MCF 10A (cell line): ENCODE measurements at regions of chr4 and their contacts with region 1.

Region 1: GRCh38 chr4:102826890-102827673 is at the start of gene UBE2D3:
- DNase-seq: peak; percentile 90
- H3K4me3 Mint-ChIP-seq: no peak within 1 kb of the TSS
- H3K27ac Mint-ChIP-seq: no peak within 1 kb of the TSS
- H3K4me1 Mint-ChIP-seq: peaks cover 11% of the 10 kb centered on the region
- H3K27me3 Mint-ChIP-seq: no peaks in the 10 kb centered on the region
- CTCF ChIP-seq: no peak
- total RNA-seq, gene UBE2D3: 505 and 547 TPM in 2 replicates

Region 2: DNA sequence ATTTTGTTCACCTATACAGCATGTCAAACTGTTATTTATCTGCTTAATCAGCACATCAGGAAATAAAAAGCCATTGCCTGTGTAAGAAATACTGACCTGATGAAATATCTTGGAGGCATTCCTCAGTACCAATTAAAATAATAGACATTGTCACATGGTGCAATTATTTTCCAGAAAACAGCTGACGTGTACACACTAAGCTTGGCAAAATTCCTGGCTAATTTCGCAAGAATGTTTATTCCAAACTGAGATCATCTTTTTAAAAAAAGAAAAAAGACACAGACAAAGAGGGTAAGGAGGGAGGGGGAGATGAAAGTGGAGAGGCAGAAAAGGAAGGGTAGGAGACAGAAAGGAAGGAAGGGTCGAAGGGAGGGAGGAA is 387.9 kb before region 1 on chr4:
- CTCF ChIA-PET with region 1: interaction called, 3 read pairs
- POLR2A ChIA-PET with region 1: interaction called, 15 read pairs
- intact Hi-C with region 1: no loop called
- DNase-seq: peak; percentile 97
- H3K4me3 Mint-ChIP-seq: peak overlapping the region; percentile 58
- H3K27ac Mint-ChIP-seq: peak overlapping the region; percentile 99
- H3K4me1 Mint-ChIP-seq: peaks cover 21% of the 10 kb centered on the region
- H3K27me3 Mint-ChIP-seq: no peaks in the 10 kb centered on the region
- CTCF ChIP-seq: no peak

Region 3: GRCh38 chr4:102610007-102610406 is 217.1 kb before region 1 on chr4:
- CTCF ChIA-PET with region 1: interaction called, 3 read pairs
- POLR2A ChIA-PET with region 1: interaction called, 13 read pairs
- intact Hi-C with region 1: no loop called
- DNase-seq: no peak
- H3K4me3 Mint-ChIP-seq: no peak overlapping the region
- H3K27ac Mint-ChIP-seq: peak overlapping the region; percentile 16
- H3K4me1 Mint-ChIP-seq: peaks cover 16% of the 10 kb centered on the region
- H3K27me3 Mint-ChIP-seq: no peaks in the 10 kb centered on the region
- CTCF ChIP-seq: peak; percentile 16

Region 4: GRCh38 chr4:102674881-102675540 is 152.1 kb before region 1 on chr4:
- CTCF ChIA-PET with region 1: no interaction called
- POLR2A ChIA-PET with region 1: no interaction called
- intact Hi-C with region 1: no loop called
- DNase-seq: no peak
- H3K4me3 Mint-ChIP-seq: no peak overlapping the region
- H3K27ac Mint-ChIP-seq: no peak overlapping the region
- H3K4me1 Mint-ChIP-seq: no peaks in the 10 kb centered on the region
- H3K27me3 Mint-ChIP-seq: no peaks in the 10 kb centered on the region
- CTCF ChIP-seq: no peak

Region 5: GRCh38 chr4:102760645-102761295 is 66.3 kb before region 1 on chr4 and contains the start of gene MANBA:
- CTCF ChIA-PET with region 1: no interaction called
- POLR2A ChIA-PET with region 1: interaction called, 59 read pairs
- intact Hi-C with region 1: no loop called
- DNase-seq: peak; percentile 84
- H3K4me3 Mint-ChIP-seq: peak within 1 kb of the TSS; percentile 90
- H3K27ac Mint-ChIP-seq: peak within 1 kb of the TSS; percentile 37
- H3K4me1 Mint-ChIP-seq: peaks cover 17% of the 10 kb centered on the region
- H3K27me3 Mint-ChIP-seq: no peaks in the 10 kb centered on the region
- CTCF ChIP-seq: no peak
- total RNA-seq, gene MANBA: 11.2 and 13.2 TPM in 2 replicates

Region 6: GRCh38 chr4:102843273-102843672 is 16.2 kb after region 1 on chr4:
- CTCF ChIA-PET with region 1: interaction called, 7 read pairs
- POLR2A ChIA-PET with region 1: interaction called, 52 read pairs
- intact Hi-C with region 1: no loop called
- DNase-seq: peak; percentile 1
- H3K4me3 Mint-ChIP-seq: no peak overlapping the region
- H3K27ac Mint-ChIP-seq: no peak overlapping the region
- H3K4me1 Mint-ChIP-seq: no peaks in the 10 kb centered on the region
- H3K27me3 Mint-ChIP-seq: no peaks in the 10 kb centered on the region
- CTCF ChIP-seq: no peak

Region 7: DNA sequence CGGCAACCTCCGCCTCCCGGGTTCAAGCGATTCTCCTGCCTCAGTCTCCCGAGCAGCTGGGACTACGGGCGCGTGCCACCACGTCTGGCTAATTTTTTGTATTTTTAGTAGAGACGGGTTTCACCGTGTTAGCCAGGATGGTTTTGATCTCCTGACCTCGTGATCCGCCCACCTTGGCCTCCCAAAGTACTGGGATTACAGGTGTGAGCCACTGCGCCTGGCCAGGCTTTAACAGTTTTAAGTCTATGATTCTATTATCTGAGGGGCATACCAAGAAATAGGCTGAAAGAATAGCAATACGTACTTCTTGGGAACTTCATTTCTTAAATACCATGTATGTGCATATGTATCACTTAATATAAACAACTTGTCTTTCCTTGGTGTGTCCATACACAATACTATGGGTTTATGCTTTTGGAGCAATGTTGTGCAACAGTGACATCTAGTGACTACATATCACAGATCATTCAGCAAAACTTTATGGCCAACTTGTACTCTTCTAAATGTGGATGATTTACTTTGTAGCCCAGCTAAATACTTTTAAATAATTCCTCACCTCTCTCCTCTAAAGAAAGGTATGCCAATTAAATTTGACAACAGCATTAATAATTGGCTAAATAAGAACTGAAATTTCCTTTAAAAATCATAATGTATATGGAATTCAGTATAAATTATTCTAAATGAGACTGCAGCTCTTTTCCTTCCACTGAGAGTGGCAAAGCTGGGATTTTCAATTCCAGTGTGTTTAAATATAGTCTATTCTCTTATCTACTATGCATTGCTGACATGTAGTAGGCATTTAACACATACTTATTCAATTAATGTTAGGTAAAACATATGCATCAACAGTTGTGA is 182.0 kb after region 1 on chr4:
- CTCF ChIA-PET with region 1: interaction called, 5 read pairs
- POLR2A ChIA-PET with region 1: interaction called, 39 read pairs
- intact Hi-C with region 1: loop called (anchors 1 kb)
- DNase-seq: peak; percentile 80
- H3K4me3 Mint-ChIP-seq: no peak overlapping the region
- H3K27ac Mint-ChIP-seq: no peak overlapping the region
- H3K4me1 Mint-ChIP-seq: peaks cover 26% of the 10 kb centered on the region
- H3K27me3 Mint-ChIP-seq: peaks cover 9% of the 10 kb centered on the region
- CTCF ChIP-seq: peak; percentile 75

Region 8: GRCh38 chr4:103099691-103100392 is 272.8 kb after region 1 on chr4 and contains the start of gene BDH2:
- CTCF ChIA-PET with region 1: interaction called, 3 read pairs
- POLR2A ChIA-PET with region 1: interaction called, 19 read pairs
- intact Hi-C with region 1: no loop called
- DNase-seq: peak; percentile 96
- H3K4me3 Mint-ChIP-seq: peak within 1 kb of the TSS; percentile 88
- H3K27ac Mint-ChIP-seq: peak within 1 kb of the TSS; percentile 90
- H3K4me1 Mint-ChIP-seq: peaks cover 16% of the 10 kb centered on the region
- H3K27me3 Mint-ChIP-seq: no peaks in the 10 kb centered on the region
- CTCF ChIP-seq: peak; percentile 59
- total RNA-seq, gene BDH2: 14.3 and 17.6 TPM in 2 replicates